Caco-2 (cell line): ENCODE measurements at regions of chr12 and their contacts with region 1.

Region 1: DNA sequence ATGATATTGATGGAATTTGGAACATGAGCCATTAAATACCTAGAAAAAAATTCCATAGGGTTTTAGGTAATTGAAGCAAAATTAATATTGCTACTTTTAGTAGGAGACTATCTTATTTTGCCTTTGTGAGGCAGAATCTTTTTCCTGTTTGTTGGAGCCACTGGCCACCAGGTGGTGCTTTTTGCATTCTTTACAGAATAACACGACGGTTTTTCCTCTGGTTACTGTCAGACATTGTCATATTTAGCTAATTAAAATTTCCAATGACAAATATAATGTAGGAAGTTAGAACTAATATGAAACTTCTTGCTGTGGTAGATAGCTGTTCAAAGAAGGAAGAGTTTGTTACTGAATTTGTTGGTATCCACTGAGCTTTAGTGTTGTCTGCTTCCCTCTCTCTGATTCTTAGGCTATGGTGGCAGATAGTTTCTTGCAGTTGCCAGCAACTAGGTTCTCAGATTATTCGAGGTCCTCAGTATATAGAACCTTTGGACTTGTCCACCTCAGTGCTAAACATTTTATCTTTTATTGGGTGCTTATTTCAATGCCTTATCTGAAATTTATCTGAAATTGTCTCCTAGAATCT is 25.7 kb downstream of the RAB21 start:
- DNase-seq: peak in 1 of 2 experiments; percentile 52
- H3K4me3 ChIP-seq: no peak overlapping the region
- H3K4me3 Mint-ChIP-seq: peak overlapping the region; percentile 7
- H3K27ac Mint-ChIP-seq: no peak overlapping the region
- H3K4me1 ChIP-seq: no peaks in the 10 kb centered on the region
- H3K4me1 Mint-ChIP-seq: peaks cover 13% of the 10 kb centered on the region
- H3K27me3 ChIP-seq: no peaks in the 10 kb centered on the region
- H3K27me3 Mint-ChIP-seq: no peaks in the 10 kb centered on the region
- CTCF ChIP-seq: peak; percentile 67 to 70

Region 2: GRCh38 chr12:71838676-71839075 is 58.3 kb after region 1 on chr12:
- CTCF ChIA-PET with region 1: no interaction called
- POLR2A ChIA-PET with region 1: no interaction called
- intact Hi-C with region 1: loop called (anchors 1 kb)
- DNase-seq: no peak
- H3K4me3 ChIP-seq: peak overlapping the region; percentile 73
- H3K4me3 Mint-ChIP-seq: peak overlapping the region; percentile 96
- H3K27ac Mint-ChIP-seq: peak overlapping the region; percentile 99
- H3K4me1 ChIP-seq: 0 out of 2 replicates have a peak, but pooled peaks cover 9% of the 10 kb centered on the region
- H3K4me1 Mint-ChIP-seq: peaks cover 6% of the 10 kb centered on the region
- H3K27me3 ChIP-seq: no peaks in the 10 kb centered on the region
- H3K27me3 Mint-ChIP-seq: no peaks in the 10 kb centered on the region
- CTCF ChIP-seq: no peak

Region 3: DNA sequence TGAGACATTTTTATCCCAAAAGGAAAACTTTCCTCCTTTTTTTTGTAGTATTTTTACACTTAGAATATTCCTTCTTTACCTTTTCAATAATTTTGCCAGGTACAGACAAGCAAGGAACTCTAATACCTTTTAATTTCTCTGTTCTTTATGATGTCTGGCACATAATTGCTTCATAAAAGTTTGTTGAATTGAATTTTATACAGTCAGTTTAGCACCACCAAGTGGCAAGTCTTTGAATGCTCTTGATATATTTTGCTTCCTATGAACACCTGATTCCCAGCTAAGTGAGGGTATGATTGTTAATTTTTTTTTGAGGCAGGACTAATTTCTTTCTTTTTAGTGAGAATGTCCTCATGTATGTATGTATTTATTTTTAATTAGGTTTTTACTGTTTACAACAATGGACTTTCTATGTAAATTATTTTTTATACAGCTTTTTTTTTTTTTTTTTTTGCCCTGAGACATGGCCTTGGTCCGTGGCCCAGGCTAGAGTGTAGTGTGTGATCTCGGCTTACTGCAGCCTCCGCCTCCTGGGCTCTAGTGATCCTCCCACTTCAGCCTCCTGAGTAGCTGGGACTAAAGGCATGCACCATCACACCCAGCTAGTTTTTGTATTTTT is 66.1 kb after region 1 on chr12:
- CTCF ChIA-PET with region 1: interaction called, 4 read pairs
- POLR2A ChIA-PET with region 1: no interaction called
- intact Hi-C with region 1: loop called (anchors 1 kb)
- DNase-seq: peak in 1 of 2 experiments; percentile 12
- H3K4me3 ChIP-seq: no peak overlapping the region
- H3K4me3 Mint-ChIP-seq: no peak overlapping the region
- H3K27ac Mint-ChIP-seq: no peak overlapping the region
- H3K4me1 ChIP-seq: no peaks in the 10 kb centered on the region
- H3K4me1 Mint-ChIP-seq: peaks cover 2% of the 10 kb centered on the region
- H3K27me3 ChIP-seq: no peaks in the 10 kb centered on the region
- H3K27me3 Mint-ChIP-seq: no peaks in the 10 kb centered on the region
- CTCF ChIP-seq: peak; percentile 40 to 55

Region 4: GRCh38 chr12:71900091-71900490 is 119.8 kb after region 1 on chr12:
- CTCF ChIA-PET with region 1: no interaction called
- POLR2A ChIA-PET with region 1: no interaction called
- intact Hi-C with region 1: loop called (anchors 1 kb)
- DNase-seq: no peak
- H3K4me3 ChIP-seq: no peak overlapping the region
- H3K4me3 Mint-ChIP-seq: no peak overlapping the region
- H3K27ac Mint-ChIP-seq: no peak overlapping the region
- H3K4me1 ChIP-seq: no peaks in the 10 kb centered on the region
- H3K4me1 Mint-ChIP-seq: no peaks in the 10 kb centered on the region
- H3K27me3 ChIP-seq: no peaks in the 10 kb centered on the region
- H3K27me3 Mint-ChIP-seq: no peaks in the 10 kb centered on the region
- CTCF ChIP-seq: peak in 1 of 2 experiments; percentile 9

Region 5: GRCh38 chr12:71938728-71939385 is 158.5 kb after region 1 on chr12 and contains the start of gene TPH2:
- CTCF ChIA-PET with region 1: interaction called, 3 read pairs
- POLR2A ChIA-PET with region 1: no interaction called
- intact Hi-C with region 1: loop called (anchors 1 kb)
- DNase-seq: peak; percentile 83 to 90
- H3K4me3 ChIP-seq: no peak within 1 kb of the TSS
- H3K4me3 Mint-ChIP-seq: no peak within 1 kb of the TSS
- H3K27ac Mint-ChIP-seq: no peak within 1 kb of the TSS
- H3K4me1 ChIP-seq: no peaks in the 10 kb centered on the region
- H3K4me1 Mint-ChIP-seq: no peaks in the 10 kb centered on the region
- H3K27me3 ChIP-seq: no peaks in the 10 kb centered on the region
- H3K27me3 Mint-ChIP-seq: peaks cover 16% of the 10 kb centered on the region
- CTCF ChIP-seq: peak; percentile 81 to 85
- total RNA-seq, gene TPH2: not detected in 2 replicates